Gastrocnemius medialis (tissue), 4 donors: ENCODE measurements at regions of chr11 and their contacts with region 1.

Region 1: DNA sequence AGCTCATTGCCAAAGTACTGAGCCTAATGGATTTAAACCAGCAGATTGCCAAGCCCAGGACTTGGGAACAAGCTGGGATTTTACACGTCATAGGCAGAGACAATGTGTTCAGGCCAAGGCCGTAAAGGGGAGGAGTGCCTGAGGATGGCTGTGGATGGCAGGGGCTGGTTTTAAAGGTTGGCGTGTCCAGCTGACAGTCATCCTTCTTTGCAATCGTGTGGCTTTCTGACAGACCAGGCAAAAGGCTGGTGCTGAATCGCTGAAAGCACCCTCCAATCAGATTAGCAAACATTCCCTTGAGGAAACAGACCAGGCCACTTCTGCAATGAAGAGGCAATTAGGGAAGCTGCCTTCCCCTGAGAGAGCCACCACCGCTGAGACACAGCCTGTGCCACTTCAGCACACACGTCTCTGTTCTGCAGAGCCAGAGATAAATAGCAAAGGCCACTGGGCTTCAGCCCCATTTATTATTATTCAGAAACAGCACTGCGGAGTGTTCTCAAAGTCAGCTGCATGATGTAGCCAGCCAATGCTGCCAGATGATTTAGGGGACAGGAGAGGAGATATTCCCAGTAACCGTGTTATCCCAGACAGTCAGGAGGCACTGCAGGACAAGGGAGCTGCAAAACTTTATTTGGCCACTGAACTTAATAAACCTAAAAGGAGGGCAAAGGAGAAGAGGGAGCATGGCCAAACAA is 54.2 kb upstream of the CSNK2A3 start:
- DNase-seq: peak; percentile 26 to 63
- ATAC-seq: peak; percentile 68 to 77
- H3K4me3 ChIP-seq: no peak overlapping the region
- H3K27ac ChIP-seq: peak overlapping the region; percentile 40 to 90 (median 50)
- H3K4me1 ChIP-seq: peaks cover 33 to 70% of the 10 kb centered on the region in 2 donors
- H3K27me3 ChIP-seq: no peaks in the 10 kb centered on the region
- CTCF ChIP-seq: peak in 2 of 5 experiments; percentile 21 to 30
- POLR2A ChIP-seq: no peak

Region 2: GRCh38 chr11:11463405-11463804 is 56.2 kb after region 1 on chr11:
- in situ Hi-C with region 1: no loop called
- intact Hi-C with region 1: loop called (anchors 5 kb)
- DNase-seq: peak in 1 of 2 donors; percentile 19
- ATAC-seq: peak in 1 of 2 donors; percentile 44
- H3K4me3 ChIP-seq: no peak overlapping the region
- H3K27ac ChIP-seq: no peak overlapping the region
- H3K4me1 ChIP-seq: peaks cover 19 to 28% of the 10 kb centered on the region in 2 donors
- H3K27me3 ChIP-seq: no peaks in the 10 kb centered on the region
- CTCF ChIP-seq: no peak
- POLR2A ChIP-seq: no peak